Breast epithelium (tissue), 4 donors: ENCODE measurements at regions of chr1 and their contacts with region 1.

Region 1: GRCh38 chr1:101632548-101633256 is 364.0 kb downstream of the OLFM3 start:
- DNase-seq: no peak
- H3K4me3 ChIP-seq: no peak overlapping the region
- H3K27ac ChIP-seq: no peak overlapping the region
- H3K4me1 ChIP-seq: no peaks in the 10 kb centered on the region
- H3K27me3 ChIP-seq: no peaks in the 10 kb centered on the region
- CTCF ChIP-seq: no peak
- POLR2A ChIP-seq: no peak

Region 2: DNA sequence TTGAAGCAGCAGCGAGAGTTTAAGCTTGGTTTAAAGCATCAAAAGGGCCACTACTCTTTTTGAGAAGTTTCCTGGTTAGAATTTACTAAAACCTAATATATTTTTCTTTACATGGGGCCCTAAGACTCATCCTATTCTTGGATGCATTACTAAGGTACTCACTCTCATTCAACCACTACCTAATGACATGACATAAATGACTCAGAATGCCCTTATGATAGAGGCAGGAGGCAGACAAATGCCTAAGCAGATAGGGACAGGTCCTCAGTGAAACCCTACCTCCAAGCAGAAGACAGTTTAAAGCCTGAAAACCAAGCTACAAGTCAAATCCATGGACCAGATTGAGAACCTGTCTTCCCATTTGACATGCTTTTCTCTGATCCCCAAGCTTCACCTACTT is 1697.2 kb before region 1 on chr1:
- intact Hi-C with region 1: loop called (anchors 10 kb)
- DNase-seq: no peak
- H3K4me3 ChIP-seq: no peak overlapping the region
- H3K27ac ChIP-seq: no peak overlapping the region
- H3K4me1 ChIP-seq: no peaks in the 10 kb centered on the region
- H3K27me3 ChIP-seq: no peaks in the 10 kb centered on the region
- CTCF ChIP-seq: no peak
- POLR2A ChIP-seq: no peak